Right lobe of liver (tissue), 6 donors: ENCODE measurements at regions of chr11 and their contacts with region 1.

Region 1: DNA sequence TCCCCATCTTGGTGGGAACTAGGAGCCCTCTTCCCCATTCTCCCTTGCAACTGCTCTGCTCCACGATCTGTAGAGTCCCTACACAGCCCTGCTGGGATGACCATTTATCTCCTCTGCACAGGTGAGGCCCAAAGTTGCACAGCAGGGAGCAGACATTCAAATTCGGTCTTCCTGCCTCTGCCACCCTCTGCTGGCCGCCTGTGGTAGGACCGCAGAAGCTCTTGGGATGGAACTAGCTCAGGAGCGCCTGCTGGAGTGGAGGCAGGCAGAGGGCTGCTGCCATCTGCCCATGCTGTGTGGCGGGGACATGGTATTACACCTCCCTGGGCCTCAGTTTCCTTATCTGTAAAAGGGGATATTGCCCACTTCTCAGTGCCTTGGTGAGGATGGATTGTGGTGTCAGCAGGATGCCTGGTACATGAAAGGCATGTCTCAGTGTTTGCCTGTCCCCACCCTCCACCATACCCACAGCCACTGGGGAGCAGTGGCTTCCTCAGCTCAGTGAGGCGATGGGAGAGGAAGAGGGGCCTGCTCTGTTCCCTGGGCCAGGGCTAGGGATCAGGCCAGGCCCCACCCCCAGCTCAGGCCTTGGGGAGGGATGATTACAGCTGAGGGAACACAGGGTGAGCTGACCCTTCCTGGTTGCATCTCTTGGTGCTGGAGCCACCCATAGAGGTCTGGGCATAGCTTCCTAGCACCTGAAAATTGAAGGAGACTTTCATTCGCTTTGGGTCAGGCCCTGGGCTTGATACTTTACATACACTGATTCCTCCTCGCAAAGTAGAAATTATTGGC is 11.3 kb upstream of the OMP start:
- DNase-seq: peak; percentile 82 to 83 (median 82)
- ATAC-seq: peak; percentile 54 to 61 (median 58)
- H3K4me3 ChIP-seq: no peak overlapping the region
- H3K27ac ChIP-seq: no peak overlapping the region
- H3K4me1 ChIP-seq: peaks cover 0 to 53% (median 24%) of the 10 kb centered on the region in 4 donors
- H3K27me3 ChIP-seq: no peaks in the 10 kb centered on the region
- CTCF ChIP-seq: peak; percentile 88 to 98 (median 90)
- POLR2A ChIP-seq: no peak

Region 2: DNA sequence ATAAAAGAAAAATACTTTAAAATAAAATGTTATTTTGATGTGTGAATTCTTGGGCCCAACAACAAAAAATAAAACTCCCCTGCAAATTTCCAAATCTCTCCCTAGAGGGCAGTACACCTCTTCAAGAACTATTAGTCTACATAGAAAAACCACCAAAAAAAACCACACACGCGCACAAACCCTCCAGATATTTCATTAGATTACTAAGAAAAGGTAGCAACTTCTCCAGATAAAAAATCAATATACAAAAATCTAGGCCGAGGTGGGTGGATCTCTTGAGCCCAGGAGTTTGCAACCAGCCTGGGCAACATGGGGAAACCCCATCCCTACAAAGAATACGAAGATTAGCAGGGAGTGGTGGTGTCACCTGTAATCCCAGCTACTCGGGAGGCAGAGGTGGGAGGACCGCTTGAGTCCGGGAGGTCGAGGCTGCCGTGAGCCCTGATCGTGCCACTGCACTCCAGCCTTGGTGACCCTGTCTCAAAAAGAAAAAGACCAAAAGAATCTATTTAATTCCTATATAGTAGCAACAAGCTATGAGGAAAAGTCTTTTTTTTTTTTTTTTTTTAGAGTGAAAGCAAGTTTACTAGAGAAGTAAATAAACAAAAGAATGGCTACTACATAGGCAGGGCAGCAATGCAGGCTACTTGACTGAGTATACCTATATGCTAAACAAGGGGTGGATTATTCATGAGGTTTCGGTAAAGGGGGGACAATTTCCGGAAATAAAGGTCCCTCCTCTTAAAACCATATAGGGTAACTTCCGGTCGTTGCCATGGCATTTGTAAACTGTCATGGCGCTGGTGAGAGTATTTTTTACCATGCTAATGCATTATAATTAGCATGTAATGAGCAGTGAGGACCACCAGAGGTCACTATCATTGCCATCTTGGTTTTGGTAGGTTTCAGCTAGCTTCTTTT is 44.1 kb before region 1 on chr11:
- intact Hi-C with region 1: loop called (anchors 2 to 5 kb)
- DNase-seq: peak in 1 of 3 donors; percentile 85
- ATAC-seq: peak; percentile 86 to 88 (median 86)
- H3K4me3 ChIP-seq: peak overlapping the region; percentile 27 to 45 (median 42)
- H3K27ac ChIP-seq: peak overlapping the region; percentile 12 to 58 (median 38)
- H3K4me1 ChIP-seq: no peaks in the 10 kb centered on the region
- H3K27me3 ChIP-seq: no peaks in the 10 kb centered on the region
- CTCF ChIP-seq: peak; percentile 70 to 78 (median 76)
- POLR2A ChIP-seq: no peak

Region 3: DNA sequence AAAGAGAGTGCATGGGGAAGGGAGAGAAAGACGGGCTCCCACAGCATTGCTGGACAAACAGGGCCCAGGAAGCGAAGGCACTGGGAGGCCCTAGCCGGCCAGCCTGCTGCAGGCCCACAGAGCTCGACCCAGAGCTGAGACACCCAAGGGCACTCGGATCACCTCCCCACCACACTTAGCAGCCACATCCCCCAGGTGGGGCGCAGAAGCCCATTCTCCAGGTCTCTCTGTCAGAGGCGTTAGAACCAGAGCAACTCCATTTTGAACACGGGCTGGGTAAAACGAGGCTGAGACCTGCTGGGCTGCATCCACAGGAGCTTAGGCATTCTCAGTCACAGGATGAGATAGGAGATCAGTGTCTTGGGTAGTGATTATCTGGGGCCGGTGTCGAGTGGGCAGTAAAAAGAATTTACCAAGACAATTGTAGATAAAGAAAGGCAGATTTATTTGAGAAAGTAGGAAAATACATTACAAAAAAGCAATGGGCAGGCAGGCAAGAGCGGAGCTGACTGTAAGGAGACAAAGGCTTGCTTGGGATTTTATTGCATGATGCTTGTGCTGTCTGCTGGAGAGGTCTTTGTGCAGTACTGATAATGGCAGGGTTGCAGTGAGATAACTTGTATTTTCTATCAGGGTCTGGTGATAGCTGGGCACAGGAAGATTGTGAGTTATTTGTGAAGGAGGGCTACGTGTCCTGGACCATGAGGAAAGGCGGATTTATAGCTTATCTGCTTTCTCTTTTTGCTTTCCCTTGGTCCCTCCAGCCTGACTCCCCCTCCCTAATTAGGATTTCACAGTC is 37.9 kb before region 1 on chr11:
- intact Hi-C with region 1: loop called (anchors 2 to 5 kb)
- DNase-seq: no peak
- ATAC-seq: no peak
- H3K4me3 ChIP-seq: no peak overlapping the region
- H3K27ac ChIP-seq: no peak overlapping the region
- H3K4me1 ChIP-seq: peaks cover 0 to 16% (median 0%) of the 10 kb centered on the region in 4 donors
- H3K27me3 ChIP-seq: no peaks in the 10 kb centered on the region
- CTCF ChIP-seq: no peak
- POLR2A ChIP-seq: no peak

Region 4: GRCh38 chr11:77175869-77176539 is 84.7 kb after region 1 on chr11:
- intact Hi-C with region 1: no loop called
- DNase-seq: peak in 2 of 3 donors; percentile 52 to 67
- ATAC-seq: peak; percentile 16 to 28 (median 18)
- H3K4me3 ChIP-seq: no peak overlapping the region
- H3K27ac ChIP-seq: peak overlapping the region in 2 of 3 donors; percentile 18 to 37
- H3K4me1 ChIP-seq: peaks cover 0 to 39% (median 15%) of the 10 kb centered on the region in 4 donors
- H3K27me3 ChIP-seq: no peaks in the 10 kb centered on the region
- CTCF ChIP-seq: no peak
- POLR2A ChIP-seq: no peak